ENCODE measurements at regions of chr1 and their contacts with region 1.

Region 1: GRCh38 chr1:111709986-111710385 is 29.2 kb downstream of the INKA2 start:
- DNase-seq: no peak
- H3K4me3 ChIP-seq: no peak overlapping the region
- H3K27ac ChIP-seq: no peak overlapping the region
- H3K4me1 ChIP-seq: no peaks in the 10 kb centered on the region; a peak in 2 of 4 replicates
- H3K27me3 ChIP-seq: no peaks in the 10 kb centered on the region
- CTCF ChIP-seq: no peak
- EP300 ChIP-seq: no peak
- RAD21 ChIP-seq: no peak

Region 2: GRCh38 chr1:111489604-111490003 is 220.4 kb before region 1 on chr1:
- CTCF ChIA-PET with region 1: no interaction called
- POLR2A ChIA-PET with region 1: no interaction called
- DNase-seq: no peak
- H3K4me3 ChIP-seq: no peak overlapping the region
- H3K27ac ChIP-seq: no peak overlapping the region
- H3K4me1 ChIP-seq: peaks cover 0 to 3% of the 10 kb centered on the region in 2 experiments; a peak in 1 of 4 replicates
- H3K27me3 ChIP-seq: no peaks in the 10 kb centered on the region
- CTCF ChIP-seq: no peak
- EP300 ChIP-seq: no peak
- RAD21 ChIP-seq: no peak

Region 3: DNA sequence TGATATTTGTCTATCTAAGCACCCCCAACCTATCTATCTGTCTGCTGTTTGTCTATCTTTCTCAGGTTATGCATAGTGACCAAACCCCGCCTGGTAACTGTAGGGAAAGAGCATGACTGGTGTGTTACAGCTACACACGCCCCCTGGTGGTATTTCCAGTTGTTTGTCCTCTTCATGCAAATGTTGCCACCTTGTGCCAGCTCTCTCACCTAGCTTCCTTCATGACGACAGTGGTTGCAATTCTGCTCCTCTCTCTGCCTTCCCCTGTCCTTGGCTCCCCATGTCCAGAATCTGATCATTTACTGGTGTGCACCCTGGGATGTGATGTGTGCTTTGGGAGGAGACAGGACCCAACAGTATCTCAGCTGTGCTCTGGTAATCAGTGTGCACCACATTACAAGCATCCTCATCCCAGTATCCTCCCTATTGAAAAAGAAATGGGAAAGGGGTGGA is 37.3 kb after region 1 on chr1:
- CTCF ChIA-PET with region 1: interaction called, 72 read pairs
- POLR2A ChIA-PET with region 1: no interaction called
- DNase-seq: peak; percentile 61
- H3K4me3 ChIP-seq: no peak overlapping the region
- H3K27ac ChIP-seq: no peak overlapping the region
- H3K4me1 ChIP-seq: peaks cover 0 to 15% of the 10 kb centered on the region in 2 experiments; a peak in 1 of 4 replicates
- H3K27me3 ChIP-seq: no peaks in the 10 kb centered on the region
- CTCF ChIP-seq: peak; percentile 65
- EP300 ChIP-seq: no peak
- RAD21 ChIP-seq: peak; percentile 65

Measured in SK-N-SH (cell line).